Left lung (tissue), 14 donors: ENCODE measurements at regions of chr10 and their contacts with region 1.

Region 1: GRCh38 chr10:118720685-118721538 is 33.9 kb downstream of the CACUL1 start:
- DNase-seq: peak in 2 of 4 donors; percentile 37 to 62
- ATAC-seq: peak; percentile 84
- H3K4me3 ChIP-seq: no peak overlapping the region
- H3K27ac ChIP-seq: no peak overlapping the region
- H3K4me1 ChIP-seq: peaks cover 4 to 15% of the 10 kb centered on the region in 2 donors
- H3K27me3 ChIP-seq: no peaks in the 10 kb centered on the region
- CTCF ChIP-seq: peak; percentile 75 to 79

Region 2: DNA sequence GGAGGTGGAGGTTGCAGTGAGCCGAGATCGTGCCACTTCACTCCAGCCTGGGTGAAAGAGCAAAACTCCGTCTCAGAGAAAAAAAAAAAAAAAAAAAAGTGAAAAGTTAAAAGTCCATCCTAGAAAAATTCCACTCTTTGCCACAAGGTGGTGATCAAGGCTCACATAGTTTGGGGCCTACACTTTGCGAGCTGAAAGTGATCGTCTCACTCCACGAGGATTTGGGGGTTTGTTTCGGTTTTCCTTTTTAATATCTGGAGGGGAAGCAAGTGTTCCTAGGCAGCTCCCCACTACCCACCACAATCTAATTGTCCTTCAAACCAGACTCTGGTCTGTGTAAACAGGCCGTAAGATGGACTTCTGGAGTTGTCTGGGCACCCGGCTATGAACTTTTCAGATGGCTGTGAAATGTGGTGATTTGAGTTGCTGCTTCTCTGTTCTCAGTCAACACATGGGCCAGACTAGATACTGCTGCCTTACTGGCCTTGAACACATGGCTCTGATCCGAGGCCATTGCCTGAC is 152.5 kb before region 1 on chr10:
- intact Hi-C with region 1: loop called in 1 of 2 experiments (anchors 5 kb)
- DNase-seq: peak in 2 of 4 donors; percentile 57 to 75
- ATAC-seq: peak; percentile 81
- H3K4me3 ChIP-seq: no peak overlapping the region
- H3K27ac ChIP-seq: no peak overlapping the region
- H3K4me1 ChIP-seq: peaks cover 0 to 3% of the 10 kb centered on the region in 2 donors
- H3K27me3 ChIP-seq: no peaks in the 10 kb centered on the region
- CTCF ChIP-seq: peak; percentile 53 to 79

Region 3: GRCh38 chr10:118594392-118595063 is 126.4 kb before region 1 on chr10:
- intact Hi-C with region 1: no loop called
- DNase-seq: peak; percentile 29 to 80 (median 53)
- ATAC-seq: peak; percentile 88
- H3K4me3 ChIP-seq: no peak overlapping the region
- H3K27ac ChIP-seq: no peak overlapping the region
- H3K4me1 ChIP-seq: no peaks in the 10 kb centered on the region
- H3K27me3 ChIP-seq: peaks cover 37 to 79% of the 10 kb centered on the region in 2 donors
- CTCF ChIP-seq: peak in 1 of 2 donors; percentile 18

Region 4: DNA sequence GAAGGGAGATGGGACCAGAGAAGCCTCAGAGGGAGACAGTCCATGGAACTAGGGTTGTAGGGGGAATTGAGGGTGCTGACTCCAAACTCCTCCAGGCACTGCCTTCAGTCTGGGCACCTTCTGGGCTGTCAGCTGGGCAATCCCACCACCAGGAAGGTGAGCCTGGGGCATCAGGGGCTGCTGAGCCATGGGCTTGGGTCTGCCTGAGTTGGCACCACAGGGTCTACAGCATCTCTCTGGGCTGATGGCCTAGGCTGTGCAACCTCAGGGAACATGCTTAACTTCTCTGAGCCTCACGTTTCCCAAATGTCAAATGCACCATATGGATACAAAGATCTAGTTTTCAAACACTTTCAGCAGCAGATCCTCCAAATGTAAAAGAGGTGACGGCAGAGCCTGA is 78.7 kb before region 1 on chr10:
- intact Hi-C with region 1: no loop called
- DNase-seq: no peak
- ATAC-seq: no peak
- H3K4me3 ChIP-seq: no peak overlapping the region
- H3K27ac ChIP-seq: no peak overlapping the region
- H3K4me1 ChIP-seq: no peaks in the 10 kb centered on the region
- H3K27me3 ChIP-seq: no peaks in the 10 kb centered on the region
- CTCF ChIP-seq: no peak

Region 5: DNA sequence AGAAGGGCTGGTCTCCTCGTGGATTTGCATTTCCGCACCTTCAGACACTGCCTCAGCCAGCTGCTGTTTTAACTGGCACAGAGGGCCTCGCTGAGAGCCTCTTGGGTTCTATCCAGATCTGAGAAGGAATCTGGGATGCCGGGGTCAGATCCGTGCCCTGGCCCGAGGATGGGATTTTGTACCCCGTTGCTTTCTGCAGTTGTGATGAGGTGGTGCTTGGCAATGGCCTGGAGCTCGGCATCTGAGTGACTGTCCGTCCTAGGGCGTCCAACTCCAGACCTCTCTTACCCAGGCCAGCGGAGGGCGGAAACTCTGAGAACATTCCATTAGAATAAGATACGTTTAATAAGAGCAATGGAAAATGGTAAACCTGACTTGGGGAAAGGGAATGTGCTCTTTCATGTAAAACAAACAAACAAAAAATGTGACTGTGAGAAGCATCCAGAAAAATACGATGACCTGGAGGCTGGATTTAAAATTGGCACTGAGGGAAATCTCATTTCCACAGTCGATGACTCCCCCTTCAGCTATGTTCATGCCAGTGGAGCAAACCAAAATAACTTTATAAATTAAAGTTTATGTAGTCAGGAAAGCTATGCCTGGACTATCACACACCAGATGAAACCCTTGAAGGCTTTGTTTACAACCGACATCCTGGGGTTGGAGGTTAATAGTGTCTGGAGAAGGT is 526.1 kb after region 1 on chr10:
- intact Hi-C with region 1: no loop called
- DNase-seq: no peak
- ATAC-seq: peak; percentile 59
- H3K4me3 ChIP-seq: no peak overlapping the region
- H3K27ac ChIP-seq: peak overlapping the region; percentile 63 to 67
- H3K4me1 ChIP-seq: peaks cover 21 to 34% of the 10 kb centered on the region in 2 donors
- H3K27me3 ChIP-seq: no peaks in the 10 kb centered on the region
- CTCF ChIP-seq: no peak